ENCODE measurements at regions of chr13 and their contacts with region 1.

Region 1: DNA sequence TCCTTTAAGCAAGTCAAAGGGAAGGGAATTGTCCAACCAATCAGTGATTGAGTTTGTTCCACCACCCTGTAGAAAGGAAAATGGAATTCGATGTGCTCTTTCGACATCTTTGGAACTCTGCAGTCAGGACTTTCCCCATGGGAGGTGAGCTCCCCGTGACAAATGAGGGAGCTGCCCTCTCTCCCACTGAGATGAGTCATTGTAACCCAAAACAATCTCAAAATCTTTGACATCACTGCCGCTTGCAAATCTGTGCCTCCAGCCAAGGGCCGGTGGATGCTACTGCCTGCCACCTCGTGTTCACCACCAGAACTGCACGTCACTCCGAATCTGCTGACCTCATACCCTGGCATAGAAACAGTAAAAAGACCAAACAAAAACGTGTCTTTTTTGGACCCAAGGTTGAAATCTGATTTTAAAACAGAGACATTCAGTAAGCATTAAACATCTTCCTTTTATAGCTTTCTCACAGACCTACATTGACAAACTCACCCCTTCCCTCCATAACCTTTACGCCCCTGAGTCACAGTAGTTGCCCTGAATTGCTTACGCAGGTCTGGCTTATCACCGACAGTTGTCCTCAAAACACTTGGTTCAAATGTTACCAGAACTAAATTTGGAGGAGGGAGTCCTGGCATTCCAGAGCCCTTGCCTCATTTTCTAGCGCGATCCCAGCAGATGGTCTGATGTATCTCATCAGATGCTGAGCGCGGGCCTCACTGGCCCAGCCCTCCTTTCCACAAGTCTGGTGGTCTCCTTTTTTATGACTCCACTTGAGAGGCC is 105.2 kb downstream of the COL4A2 start:
- DNase-seq: peak; percentile 100
- ATAC-seq: peak; percentile 84
- H3K4me3 ChIP-seq: no peak overlapping the region
- H3K27ac ChIP-seq: peak overlapping the region; percentile 71
- H3K4me1 ChIP-seq: peaks cover 37% of the 10 kb centered on the region
- H3K27me3 ChIP-seq: no peaks in the 10 kb centered on the region
- CTCF ChIP-seq: peak; percentile 98
- POLR2A ChIP-seq: peak; percentile 42; the same call in 1 of the 2 replicates
- RAD21 ChIP-seq: peak; percentile 94

Region 2: GRCh38 chr13:110225609-110226562 is 186.4 kb before region 1 on chr13:
- CTCF ChIA-PET with region 1: interaction called, 3 read pairs
- POLR2A ChIA-PET with region 1: no interaction called
- dilution Hi-C with region 1: no loop called
- in situ Hi-C with region 1: no loop called
- intact Hi-C with region 1: loop called (anchors 1 kb)
- DNase-seq: peak; percentile 64
- ATAC-seq: peak; percentile 24
- H3K4me3 ChIP-seq: no peak overlapping the region
- H3K27ac ChIP-seq: peak overlapping the region; percentile 45; the same call in 1 of the 2 replicates
- H3K4me1 ChIP-seq: peaks cover 28% of the 10 kb centered on the region
- H3K27me3 ChIP-seq: no peaks in the 10 kb centered on the region
- CTCF ChIP-seq: no peak
- POLR2A ChIP-seq: no peak
- RAD21 ChIP-seq: no peak

Region 3: GRCh38 chr13:110306960-110307746 is 105.2 kb before region 1 on chr13 and contains the starts of genes COL4A1 and COL4A2:
- CTCF ChIA-PET with region 1: interaction called, 4 read pairs
- POLR2A ChIA-PET with region 1: interaction called, 4 read pairs
- dilution Hi-C with region 1: no loop called
- in situ Hi-C with region 1: no loop called
- intact Hi-C with region 1: loop called (anchors 1 kb)
- DNase-seq: peak; percentile 77
- ATAC-seq: peak; percentile 67
- H3K4me3 ChIP-seq: peak within 1 kb of the TSS; percentile 84
- H3K27ac ChIP-seq: peak within 1 kb of the TSS; percentile 78
- H3K4me1 ChIP-seq: peaks cover 34% of the 10 kb centered on the region
- H3K27me3 ChIP-seq: no peaks in the 10 kb centered on the region
- CTCF ChIP-seq: no peak
- POLR2A ChIP-seq: peak; percentile 99
- RAD21 ChIP-seq: no peak; the same call in 1 of the 2 replicates
- total RNA-seq, gene COL4A1: 230 and 263 TPM in 2 replicates
- total RNA-seq, gene COL4A2: 90.7 and 97.5 TPM in 2 replicates

Region 4: GRCh38 chr13:110359840-110360301 is 52.5 kb before region 1 on chr13:
- CTCF ChIA-PET with region 1: no interaction called
- POLR2A ChIA-PET with region 1: no interaction called
- dilution Hi-C with region 1: no loop called
- in situ Hi-C with region 1: no loop called
- intact Hi-C with region 1: loop called (anchors 1 kb)
- DNase-seq: peak; percentile 97
- ATAC-seq: peak; percentile 95
- H3K4me3 ChIP-seq: no peak overlapping the region
- H3K27ac ChIP-seq: peak overlapping the region; percentile 89
- H3K4me1 ChIP-seq: peaks cover 9% of the 10 kb centered on the region
- H3K27me3 ChIP-seq: no peaks in the 10 kb centered on the region
- CTCF ChIP-seq: no peak
- POLR2A ChIP-seq: no peak
- RAD21 ChIP-seq: peak; percentile 16; the same call in 1 of the 2 replicates

Region 5: DNA sequence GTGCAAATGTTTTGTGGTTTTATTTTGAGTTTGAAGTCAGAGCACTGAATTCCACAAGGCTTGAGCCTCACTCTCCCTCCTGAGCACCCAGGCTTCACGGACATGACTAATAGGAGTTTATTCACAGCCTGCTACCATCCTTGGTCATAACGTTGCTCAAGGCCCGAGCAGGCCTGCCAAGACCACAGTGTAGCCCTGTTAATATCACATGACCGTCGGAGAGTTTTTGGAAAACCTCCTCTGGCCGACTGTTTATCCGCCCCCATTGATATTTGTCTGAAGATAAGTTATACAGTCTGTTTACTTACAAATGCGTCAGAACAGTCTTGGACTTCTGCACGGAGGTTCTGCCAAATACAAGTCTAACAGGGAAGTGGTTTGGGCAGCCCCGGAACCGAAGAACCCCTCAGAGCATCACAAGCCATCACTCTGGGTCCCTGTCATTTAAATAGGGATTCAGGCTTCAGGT is 15.4 kb before region 1 on chr13:
- CTCF ChIA-PET with region 1: interaction called, 5 read pairs
- POLR2A ChIA-PET with region 1: no interaction called
- dilution Hi-C with region 1: no loop called
- in situ Hi-C with region 1: no loop called
- intact Hi-C with region 1: loop called (anchors 2 kb)
- DNase-seq: peak; percentile 100
- ATAC-seq: peak; percentile 87
- H3K4me3 ChIP-seq: no peak overlapping the region
- H3K27ac ChIP-seq: peak overlapping the region; percentile 73
- H3K4me1 ChIP-seq: peaks cover 28% of the 10 kb centered on the region
- H3K27me3 ChIP-seq: no peaks in the 10 kb centered on the region
- CTCF ChIP-seq: no peak
- POLR2A ChIP-seq: no peak; the same call in none of the 2 replicates
- RAD21 ChIP-seq: no peak; the same call in 1 of the 2 replicates

Measured in IMR-90 (cell line).